ENCODE measurements at regions of chr15 and their contacts with region 1.

Region 1: GRCh38 chr15:80776420-80777045 is 2.6 kb upstream of the CEMIP start:
- DNase-seq: peak; percentile 75
- ATAC-seq: no peak
- H3K4me3 Mint-ChIP-seq: no peak overlapping the region
- H3K27ac Mint-ChIP-seq: no peak overlapping the region
- H3K4me1 Mint-ChIP-seq: peaks cover 11% of the 10 kb centered on the region
- H3K27me3 Mint-ChIP-seq: peaks cover 39% of the 10 kb centered on the region
- CTCF ChIP-seq: peak; percentile 83

Region 2: DNA sequence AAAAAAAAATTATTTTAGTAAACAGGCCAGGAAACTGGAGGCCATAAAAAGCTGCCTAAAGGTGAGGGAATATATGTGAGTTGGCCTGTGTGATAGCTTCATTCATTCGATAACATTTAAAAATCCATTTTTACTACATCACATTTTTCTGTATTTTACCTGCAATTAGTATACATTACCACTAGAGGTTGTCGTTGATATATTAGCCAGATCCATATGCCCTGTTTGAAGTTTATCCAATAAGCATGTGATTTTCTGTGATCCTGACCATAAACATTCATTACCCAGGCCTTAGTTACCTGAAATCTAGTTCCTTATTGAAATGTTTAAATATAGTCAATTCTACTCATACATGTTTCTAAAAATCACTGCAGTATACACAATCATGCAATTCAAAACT is 301.0 kb before region 1 on chr15:
- CTCF ChIA-PET with region 1: interaction called, 10 read pairs
- POLR2A ChIA-PET with region 1: no interaction called
- DNase-seq: no peak
- ATAC-seq: no peak
- H3K4me3 Mint-ChIP-seq: no peak overlapping the region
- H3K27ac Mint-ChIP-seq: no peak overlapping the region
- H3K4me1 Mint-ChIP-seq: peaks cover 52% of the 10 kb centered on the region
- H3K27me3 Mint-ChIP-seq: no peaks in the 10 kb centered on the region
- CTCF ChIP-seq: no peak

Region 3: GRCh38 chr15:80636675-80637074 is 139.9 kb before region 1 on chr15:
- CTCF ChIA-PET with region 1: interaction called, 17 read pairs
- POLR2A ChIA-PET with region 1: no interaction called
- DNase-seq: peak; percentile 31
- ATAC-seq: peak; percentile 92
- H3K4me3 Mint-ChIP-seq: no peak overlapping the region
- H3K27ac Mint-ChIP-seq: no peak overlapping the region
- H3K4me1 Mint-ChIP-seq: no peaks in the 10 kb centered on the region
- H3K27me3 Mint-ChIP-seq: peaks cover 4% of the 10 kb centered on the region; the same call in 1 of the 2 replicates
- CTCF ChIP-seq: no peak

Region 4: DNA sequence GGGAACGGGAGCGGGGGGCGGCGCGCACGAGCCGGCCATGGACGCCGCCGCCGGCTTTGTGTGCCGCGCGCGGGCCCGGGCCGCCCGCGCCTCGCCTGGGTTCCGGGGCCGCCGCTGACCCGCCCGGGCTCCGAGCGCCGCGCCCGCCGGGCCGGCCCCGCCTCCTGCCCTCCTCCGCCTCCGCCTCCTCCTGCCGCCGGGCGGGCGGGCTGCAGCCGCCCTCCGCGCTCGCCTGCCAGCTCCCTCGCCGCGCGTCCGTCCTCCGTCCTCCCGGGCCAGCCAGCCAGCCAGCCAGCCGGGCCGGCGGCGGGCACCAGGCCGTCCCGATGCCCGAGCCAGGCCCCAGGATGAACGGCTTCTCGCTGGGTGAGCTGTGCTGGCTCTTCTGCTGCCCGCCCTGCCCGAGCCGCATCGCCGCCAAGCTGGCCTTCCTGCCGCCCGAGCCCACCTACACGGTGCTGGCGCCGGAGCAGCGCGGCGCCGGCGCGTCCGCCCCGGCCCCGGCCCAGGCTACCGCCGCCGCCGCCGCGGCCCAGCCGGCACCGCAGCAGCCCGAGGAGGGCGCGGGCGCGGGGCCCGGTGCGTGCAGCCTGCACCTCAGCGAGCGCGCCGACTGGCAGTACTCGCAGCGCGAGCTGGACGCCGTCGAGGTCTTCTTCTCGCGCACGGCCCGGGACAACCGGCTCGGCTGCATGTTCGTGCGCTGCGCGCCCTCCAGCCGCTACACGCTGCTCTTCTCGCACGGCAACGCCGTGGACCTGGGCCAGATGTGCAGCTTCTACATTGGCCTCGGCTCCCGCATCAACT is 81.2 kb before region 1 on chr15 and contains the start of gene ABHD17C:
- CTCF ChIA-PET with region 1: interaction called, 26 read pairs
- POLR2A ChIA-PET with region 1: no interaction called
- DNase-seq: peak; percentile 58
- ATAC-seq: peak; percentile 70
- H3K4me3 Mint-ChIP-seq: peak within 1 kb of the TSS; percentile 82
- H3K27ac Mint-ChIP-seq: no peak within 1 kb of the TSS
- H3K4me1 Mint-ChIP-seq: peaks cover 29% of the 10 kb centered on the region
- H3K27me3 Mint-ChIP-seq: peaks cover 25% of the 10 kb centered on the region
- CTCF ChIP-seq: no peak
- total RNA-seq, gene ABHD17C: 23.6 to 29.0 TPM (median 23.6 TPM) in 3 replicates

Region 5: GRCh38 chr15:80846031-80846815 is 69.7 kb after region 1 on chr15:
- CTCF ChIA-PET with region 1: interaction called, 12 read pairs
- POLR2A ChIA-PET with region 1: no interaction called
- DNase-seq: no peak
- ATAC-seq: no peak; the same call in 1 of the 2 replicates
- H3K4me3 Mint-ChIP-seq: no peak overlapping the region
- H3K27ac Mint-ChIP-seq: no peak overlapping the region
- H3K4me1 Mint-ChIP-seq: no peaks in the 10 kb centered on the region
- H3K27me3 Mint-ChIP-seq: peaks cover 5% of the 10 kb centered on the region; the same call in 1 of the 2 replicates
- CTCF ChIP-seq: no peak

Region 6: GRCh38 chr15:80915472-80915871 is 138.9 kb after region 1 on chr15:
- CTCF ChIA-PET with region 1: interaction called, 25 read pairs
- POLR2A ChIA-PET with region 1: no interaction called
- DNase-seq: peak; percentile 66
- ATAC-seq: peak; percentile 99
- H3K4me3 Mint-ChIP-seq: no peak overlapping the region
- H3K27ac Mint-ChIP-seq: no peak overlapping the region
- H3K4me1 Mint-ChIP-seq: peaks cover 23% of the 10 kb centered on the region
- H3K27me3 Mint-ChIP-seq: no peaks in the 10 kb centered on the region; the same call in 1 of the 2 replicates
- CTCF ChIP-seq: no peak